ENCODE measurements at regions of chr4 and their contacts with region 1.

Region 1: DNA sequence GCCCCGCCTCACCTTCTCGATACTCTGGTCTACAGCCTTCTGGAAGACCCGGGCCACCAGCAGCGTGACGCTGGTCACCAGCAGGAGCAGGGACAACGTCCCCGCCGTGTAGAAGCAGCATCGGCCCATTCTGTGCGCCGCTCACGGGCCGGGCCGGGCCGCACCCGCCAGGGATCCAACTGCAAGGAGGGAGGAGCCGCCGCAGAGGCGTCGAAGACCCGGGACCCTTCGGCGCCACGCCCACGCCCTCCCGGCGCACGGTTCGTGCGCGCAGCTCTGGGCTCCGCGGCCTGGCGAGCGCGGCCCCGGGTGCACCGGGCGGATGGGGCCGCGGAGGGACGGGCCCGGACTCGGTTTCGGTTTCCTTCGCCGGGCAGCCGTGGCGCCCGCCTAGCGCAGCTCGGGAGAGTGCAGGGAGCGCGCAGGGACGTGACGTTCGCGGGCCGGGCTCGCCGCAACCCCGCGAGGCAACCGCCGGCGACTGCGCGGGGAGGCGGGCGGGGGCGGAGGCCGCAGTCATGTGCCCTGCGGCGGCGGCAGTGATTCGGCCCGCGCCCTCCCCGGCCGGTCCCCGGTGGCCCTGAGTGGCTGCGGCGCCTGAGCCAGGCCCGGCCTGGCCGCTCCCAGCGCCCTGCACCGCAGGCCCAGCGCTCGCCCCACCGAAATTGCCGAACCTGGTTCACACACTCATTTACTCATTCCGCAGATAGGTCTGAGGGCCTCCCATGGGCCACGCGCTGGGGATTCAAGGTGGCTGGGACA is at the start of gene SCARB2:
- DNase-seq: peak; percentile 72
- H3K4me3 Mint-ChIP-seq: peak within 1 kb of the TSS; percentile 84
- H3K27ac Mint-ChIP-seq: peak within 1 kb of the TSS; percentile 60
- H3K4me1 Mint-ChIP-seq: peaks cover 20% of the 10 kb centered on the region
- H3K27me3 Mint-ChIP-seq: peaks cover 39% of the 10 kb centered on the region
- total RNA-seq, gene SCARB2: 1.3 and 1.9 TPM in 2 replicates

Region 2: DNA sequence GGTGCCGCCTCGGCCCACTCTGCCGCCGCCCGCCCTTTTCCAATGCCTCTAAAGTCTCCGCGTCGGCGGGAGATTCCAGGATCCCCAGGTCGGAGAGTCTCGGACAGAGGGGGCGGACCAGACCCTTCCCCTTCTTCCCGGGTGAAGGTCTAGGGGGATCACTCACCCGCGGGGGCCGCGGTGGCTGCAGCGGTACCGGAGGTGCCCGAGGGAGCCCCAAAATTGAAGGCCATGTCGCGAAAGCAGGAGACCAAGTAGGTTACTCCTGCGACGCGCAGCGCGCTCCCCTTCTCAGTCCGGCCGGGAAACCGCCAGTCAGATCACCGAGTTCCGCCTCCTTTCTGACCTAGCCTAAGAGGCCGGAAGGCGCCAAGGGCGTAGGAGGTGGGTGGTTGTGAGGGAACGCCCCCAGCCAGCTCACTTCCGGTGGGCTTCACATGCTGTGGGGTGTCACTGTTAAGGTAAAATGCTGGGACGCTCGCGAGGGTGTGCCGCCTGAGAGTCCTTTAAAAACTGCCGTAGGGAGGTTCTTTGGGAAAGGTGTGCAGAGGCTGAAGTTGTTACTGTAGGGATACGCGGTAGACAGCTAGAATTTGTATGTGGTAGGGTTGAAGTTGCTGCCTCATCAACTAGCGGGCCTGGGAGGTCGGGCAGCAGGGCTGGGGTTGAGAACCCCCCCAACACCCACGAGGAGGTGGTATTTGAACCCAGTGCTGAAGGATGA is 65.3 kb before region 1 on chr4 and contains the start of gene NUP54:
- intact Hi-C with region 1: loop called (anchors 1 kb)
- DNase-seq: peak; percentile 94
- H3K4me3 Mint-ChIP-seq: peak within 1 kb of the TSS; percentile 89
- H3K27ac Mint-ChIP-seq: peak within 1 kb of the TSS; percentile 94
- H3K4me1 Mint-ChIP-seq: peaks cover 23% of the 10 kb centered on the region
- H3K27me3 Mint-ChIP-seq: no peaks in the 10 kb centered on the region
- total RNA-seq, gene NUP54: 74.7 and 75.6 TPM in 2 replicates

Region 3: DNA sequence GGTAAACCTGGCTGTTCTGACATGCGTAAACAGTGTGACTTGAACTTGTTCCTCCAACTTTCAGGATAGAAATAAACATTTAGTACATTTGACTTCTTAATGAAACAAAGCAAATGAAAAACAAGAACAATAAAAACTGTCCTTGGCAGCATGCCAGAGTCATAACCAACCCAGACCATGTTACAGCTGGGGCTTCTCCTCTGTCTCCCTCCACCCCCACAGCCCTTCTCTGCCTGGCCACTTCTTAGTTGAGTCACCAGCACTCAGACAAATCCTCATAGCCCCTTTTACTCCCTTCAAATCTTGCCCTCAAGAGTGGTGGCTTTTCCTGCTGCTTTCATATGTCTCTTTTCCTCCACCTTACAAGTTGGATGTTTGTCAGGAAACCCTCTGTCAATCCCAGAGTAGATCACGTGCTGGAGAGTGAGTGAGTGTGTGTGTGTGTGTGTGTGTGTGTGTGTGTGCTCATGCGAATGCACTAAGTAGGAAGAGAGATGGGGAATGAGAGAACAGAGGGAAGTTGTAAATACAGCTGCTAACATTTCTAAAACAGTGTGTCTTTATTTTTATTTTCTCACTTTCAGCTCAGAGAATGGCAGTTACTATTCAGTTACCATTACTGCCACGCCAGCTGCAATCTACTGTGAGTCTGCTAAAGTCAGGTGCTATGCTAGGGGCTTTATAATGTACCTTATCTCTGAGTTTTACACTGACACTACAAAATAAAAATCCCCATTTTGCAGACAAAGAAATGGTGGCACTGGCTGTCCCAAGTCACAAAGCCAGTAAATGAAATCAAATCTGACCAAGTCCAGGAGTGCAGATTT is 15.0 kb before region 1 on chr4:
- intact Hi-C with region 1: loop called (anchors 2 kb)
- DNase-seq: no peak
- H3K4me3 Mint-ChIP-seq: no peak overlapping the region
- H3K27ac Mint-ChIP-seq: no peak overlapping the region
- H3K4me1 Mint-ChIP-seq: peaks cover 26% of the 10 kb centered on the region
- H3K27me3 Mint-ChIP-seq: no peaks in the 10 kb centered on the region

Region 4: GRCh38 chr4:76301068-76301774 is 87.6 kb after region 1 on chr4:
- intact Hi-C with region 1: loop called (anchors 1 kb)
- DNase-seq: peak; percentile 37
- H3K4me3 Mint-ChIP-seq: no peak overlapping the region
- H3K27ac Mint-ChIP-seq: peak overlapping the region; percentile 5
- H3K4me1 Mint-ChIP-seq: peaks cover 49% of the 10 kb centered on the region
- H3K27me3 Mint-ChIP-seq: peaks cover 9% of the 10 kb centered on the region

Region 5: DNA sequence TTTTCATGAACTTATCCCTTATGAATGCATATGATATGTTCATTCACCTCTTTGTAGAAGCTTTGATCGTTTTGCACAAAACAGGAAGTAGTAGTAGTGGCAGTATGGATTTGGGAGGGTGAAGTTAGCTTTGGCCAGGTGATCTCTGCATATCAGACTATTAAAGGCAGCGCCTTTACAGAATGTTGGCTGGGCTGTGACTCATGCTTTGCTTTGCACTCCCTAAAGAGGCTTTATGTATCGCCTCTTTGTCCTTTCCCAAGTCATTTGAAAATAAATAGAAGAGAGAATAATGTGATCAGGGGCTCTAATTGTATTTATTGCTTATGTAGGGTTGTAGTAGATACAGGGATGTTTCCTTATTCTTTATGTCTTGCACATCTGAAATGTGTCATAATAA is 271.9 kb after region 1 on chr4:
- intact Hi-C with region 1: no loop called
- DNase-seq: no peak
- H3K4me3 Mint-ChIP-seq: no peak overlapping the region
- H3K27ac Mint-ChIP-seq: no peak overlapping the region
- H3K4me1 Mint-ChIP-seq: no peaks in the 10 kb centered on the region
- H3K27me3 Mint-ChIP-seq: peaks cover 6% of the 10 kb centered on the region

Region 6: GRCh38 chr4:77273412-77273811 is 1059.8 kb after region 1 on chr4:
- intact Hi-C with region 1: no loop called
- DNase-seq: no peak
- H3K4me3 Mint-ChIP-seq: no peak overlapping the region
- H3K27ac Mint-ChIP-seq: no peak overlapping the region
- H3K4me1 Mint-ChIP-seq: no peaks in the 10 kb centered on the region
- H3K27me3 Mint-ChIP-seq: peaks cover 1% of the 10 kb centered on the region